ENCODE measurements at regions of chr5 and their contacts with region 1.

Region 1: GRCh38 chr5:17132444-17133083 is 84.9 kb upstream of the BASP1 start:
- DNase-seq: peak; percentile 67
- H3K4me3 ChIP-seq: no peak overlapping the region
- H3K27ac ChIP-seq: no peak overlapping the region
- H3K4me1 ChIP-seq: peaks cover 23% of the 10 kb centered on the region
- H3K27me3 ChIP-seq: no peaks in the 10 kb centered on the region
- CTCF ChIP-seq: peak; percentile 26 to 27
- POLR2A ChIP-seq: no peak

Region 2: GRCh38 chr5:16916262-16916865 is 216.2 kb before region 1 on chr5:
- CTCF ChIA-PET with region 1: interaction called, 11 read pairs
- POLR2A ChIA-PET with region 1: no interaction called
- dilution Hi-C with region 1: no loop called
- intact Hi-C with region 1: no loop called
- DNase-seq: peak; percentile 93
- H3K4me3 ChIP-seq: no peak overlapping the region
- H3K27ac ChIP-seq: peak overlapping the region; percentile 54
- H3K4me1 ChIP-seq: peaks cover 57% of the 10 kb centered on the region
- H3K27me3 ChIP-seq: no peaks in the 10 kb centered on the region
- CTCF ChIP-seq: no peak
- POLR2A ChIP-seq: no peak

Region 3: DNA sequence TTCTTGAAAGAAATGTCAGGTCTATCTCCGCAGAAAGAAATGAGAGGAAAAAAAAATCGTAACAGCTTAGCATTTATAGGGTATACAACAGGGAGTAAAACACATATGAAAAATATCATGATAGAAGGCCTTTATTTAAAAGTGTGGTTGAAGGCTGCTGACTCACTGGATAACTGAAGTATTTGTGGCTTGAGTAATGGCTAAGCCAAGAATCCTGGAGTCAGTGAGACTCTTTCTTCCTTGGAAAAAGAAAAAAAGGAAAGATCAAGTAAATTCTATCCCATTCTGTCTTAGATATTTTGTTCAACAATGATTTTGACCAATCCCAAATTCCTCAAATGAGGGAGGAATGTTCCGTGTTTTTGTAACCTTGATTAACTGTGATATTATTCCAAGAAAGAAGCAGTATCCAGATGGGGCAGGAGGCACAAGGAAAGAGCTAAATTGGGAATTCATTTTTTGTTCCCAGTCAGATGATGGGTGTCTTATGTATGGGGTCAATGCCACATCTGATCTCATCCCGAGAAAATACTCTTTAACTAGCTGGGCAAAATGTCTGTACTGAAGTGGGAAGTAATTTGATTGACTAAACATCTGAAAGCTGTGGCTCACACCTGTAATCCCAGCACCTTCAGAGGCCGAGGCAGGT is 132.1 kb before region 1 on chr5:
- CTCF ChIA-PET with region 1: interaction called, 37 read pairs
- POLR2A ChIA-PET with region 1: no interaction called
- dilution Hi-C with region 1: no loop called
- intact Hi-C with region 1: loop called (anchors 1 kb)
- DNase-seq: peak; percentile 77
- H3K4me3 ChIP-seq: no peak overlapping the region
- H3K27ac ChIP-seq: peak overlapping the region; percentile 97
- H3K4me1 ChIP-seq: peaks cover 32% of the 10 kb centered on the region
- H3K27me3 ChIP-seq: no peaks in the 10 kb centered on the region
- CTCF ChIP-seq: no peak
- POLR2A ChIP-seq: no peak

Region 4: GRCh38 chr5:17061973-17062470 is 70.5 kb before region 1 on chr5:
- CTCF ChIA-PET with region 1: interaction called, 27 read pairs
- POLR2A ChIA-PET with region 1: no interaction called
- dilution Hi-C with region 1: no loop called
- intact Hi-C with region 1: no loop called
- DNase-seq: no peak
- H3K4me3 ChIP-seq: no peak overlapping the region
- H3K27ac ChIP-seq: no peak overlapping the region
- H3K4me1 ChIP-seq: peaks cover 7% of the 10 kb centered on the region
- H3K27me3 ChIP-seq: no peaks in the 10 kb centered on the region
- CTCF ChIP-seq: no peak
- POLR2A ChIP-seq: no peak

Region 5: DNA sequence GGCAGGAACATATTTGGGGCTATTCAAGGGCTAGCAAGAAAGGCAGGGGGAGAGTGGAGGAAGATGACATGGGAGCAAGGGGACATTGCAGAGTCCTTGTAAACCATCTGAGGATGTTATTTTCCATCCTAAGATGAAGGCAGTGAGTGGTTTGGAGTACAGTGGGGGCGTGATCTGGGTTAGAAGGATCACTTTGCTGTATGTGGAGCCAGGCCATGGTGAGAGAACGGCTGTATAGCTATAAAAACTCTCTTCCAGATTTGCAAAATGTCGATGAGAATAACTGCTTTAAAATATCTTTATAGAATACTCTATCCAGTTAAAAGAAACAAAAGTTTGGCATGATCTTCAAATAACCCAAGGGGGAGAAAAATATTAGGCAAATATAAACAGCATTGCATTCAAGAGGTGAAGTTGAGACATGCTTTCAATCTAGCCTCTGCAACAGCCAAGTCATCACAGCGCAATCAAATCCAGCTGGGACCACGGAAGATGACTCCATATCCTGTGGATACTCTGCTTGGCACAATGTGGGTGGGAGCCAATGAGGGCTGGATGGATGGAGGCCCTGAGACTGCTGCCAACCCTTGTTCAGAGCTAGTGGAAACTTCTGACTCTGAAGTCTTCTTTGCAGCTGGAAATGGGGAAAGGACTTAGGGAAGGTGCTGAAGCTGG is 26.7 kb before region 1 on chr5:
- CTCF ChIA-PET with region 1: interaction called, 25 read pairs
- POLR2A ChIA-PET with region 1: no interaction called
- dilution Hi-C with region 1: no loop called
- intact Hi-C with region 1: no loop called
- DNase-seq: peak; percentile 82
- H3K4me3 ChIP-seq: no peak overlapping the region
- H3K27ac ChIP-seq: peak overlapping the region; percentile 27
- H3K4me1 ChIP-seq: peaks cover 13% of the 10 kb centered on the region
- H3K27me3 ChIP-seq: no peaks in the 10 kb centered on the region
- CTCF ChIP-seq: no peak
- POLR2A ChIP-seq: no peak

Region 6: DNA sequence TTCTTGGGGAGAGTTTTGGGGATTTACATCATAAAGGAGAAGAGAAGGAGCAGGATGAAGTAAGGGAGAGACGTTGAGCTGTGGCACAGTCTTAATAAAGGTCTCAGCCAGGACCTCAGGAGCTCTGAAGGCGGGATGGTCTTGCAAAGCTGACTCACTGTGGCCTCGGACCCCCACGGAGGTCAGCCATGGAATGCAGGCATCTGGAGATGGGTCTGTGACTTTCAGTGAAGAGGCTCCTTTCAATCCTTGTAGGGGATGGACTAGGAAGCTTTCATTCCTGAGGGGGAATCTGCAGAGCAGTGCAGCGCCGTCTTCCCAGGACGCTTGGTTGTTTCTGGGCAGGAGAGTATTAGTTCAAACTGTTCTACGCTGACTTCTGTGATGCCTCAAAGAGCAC is 19.1 kb after region 1 on chr5:
- CTCF ChIA-PET with region 1: interaction called, 30 read pairs
- POLR2A ChIA-PET with region 1: no interaction called
- dilution Hi-C with region 1: no loop called
- intact Hi-C with region 1: no loop called
- DNase-seq: no peak
- H3K4me3 ChIP-seq: no peak overlapping the region
- H3K27ac ChIP-seq: no peak overlapping the region
- H3K4me1 ChIP-seq: peaks cover 11% of the 10 kb centered on the region
- H3K27me3 ChIP-seq: no peaks in the 10 kb centered on the region
- CTCF ChIP-seq: no peak
- POLR2A ChIP-seq: no peak

Region 7: DNA sequence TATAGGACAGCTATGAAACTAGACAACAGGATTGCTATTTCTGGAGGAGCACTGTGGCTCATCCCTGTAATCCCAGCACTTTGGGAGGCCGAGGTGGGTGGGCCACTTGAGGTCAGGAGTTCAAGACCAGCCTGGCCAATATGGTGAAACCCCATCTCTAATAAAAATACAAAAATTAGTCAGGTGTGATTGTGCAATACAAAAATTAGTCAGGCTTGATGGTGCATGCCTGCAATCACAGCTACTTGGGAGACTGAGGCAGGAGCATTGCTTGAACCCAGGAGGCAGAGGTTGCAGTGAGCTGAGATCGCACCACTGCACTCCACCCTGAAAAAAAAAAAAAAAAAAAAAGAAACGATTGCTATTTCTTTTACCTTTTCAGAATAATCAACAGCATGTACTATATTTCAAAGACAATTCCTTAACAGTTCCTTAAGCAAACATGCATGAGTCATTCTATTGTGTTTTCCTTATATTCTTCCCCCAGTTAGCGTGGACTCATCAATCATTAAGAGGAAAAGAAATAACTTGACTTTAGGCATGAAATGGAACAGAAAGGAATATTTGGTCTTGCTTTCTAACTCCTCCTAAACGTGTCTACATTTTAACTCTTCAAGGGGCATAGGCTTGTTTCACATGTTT is 664.3 kb after region 1 on chr5:
- CTCF ChIA-PET with region 1: no interaction called
- POLR2A ChIA-PET with region 1: no interaction called
- dilution Hi-C with region 1: no loop called
- intact Hi-C with region 1: no loop called
- DNase-seq: peak; percentile 77
- H3K4me3 ChIP-seq: no peak overlapping the region
- H3K27ac ChIP-seq: no peak overlapping the region
- H3K4me1 ChIP-seq: peaks cover 3% of the 10 kb centered on the region
- H3K27me3 ChIP-seq: no peaks in the 10 kb centered on the region
- CTCF ChIP-seq: no peak
- POLR2A ChIP-seq: no peak